AG04449 (cell line): ENCODE measurements at regions of chr2 and their contacts with region 1.

Region 1: DNA sequence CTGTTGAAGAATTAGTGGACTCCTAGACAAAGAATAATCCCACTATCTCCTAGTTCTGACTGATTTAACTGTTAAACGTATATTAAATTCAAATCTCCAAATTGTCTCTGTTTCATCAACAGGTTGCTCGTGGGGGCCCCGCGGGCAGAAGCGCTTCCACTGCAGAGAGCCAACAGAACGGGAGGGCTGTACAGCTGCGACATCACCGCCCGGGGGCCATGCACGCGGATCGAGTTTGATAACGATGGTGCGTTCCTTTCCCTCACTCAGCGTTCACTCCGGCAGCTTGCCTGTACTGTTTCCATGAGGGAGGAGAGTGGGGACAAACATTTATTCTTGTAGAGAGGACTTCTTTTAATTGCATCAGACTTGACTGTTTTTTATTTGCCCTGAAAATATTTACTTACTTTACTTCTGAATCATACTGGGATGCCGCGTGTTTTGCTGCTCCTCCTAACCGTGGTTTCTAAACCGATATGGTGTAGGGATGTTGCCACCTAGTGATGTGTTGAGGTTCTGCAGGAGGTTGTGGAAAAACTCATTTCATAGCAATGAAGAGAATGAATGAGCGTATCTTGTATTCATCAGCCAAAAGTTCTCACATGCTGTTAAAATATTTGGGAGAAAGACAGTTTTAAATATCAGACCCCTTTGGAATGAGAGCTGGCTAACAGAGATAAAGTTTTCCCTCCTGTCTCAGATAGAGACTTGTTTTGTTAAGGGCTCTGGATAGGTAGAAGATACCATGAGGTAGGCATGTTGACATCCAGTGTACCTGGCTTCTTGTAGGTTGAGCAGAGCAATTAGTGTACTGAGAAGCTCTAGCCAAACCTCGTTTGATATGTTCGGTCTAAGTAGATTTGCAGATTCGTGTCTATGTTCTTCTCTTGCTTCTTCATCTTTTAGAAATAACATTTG is 38.3 kb downstream of the ITGA6 start:
- DNase-seq: peak; percentile 56
- H3K4me3 ChIP-seq: peak overlapping the region; percentile 52
- CTCF ChIP-seq: peak; percentile 73

Region 2: GRCh38 chr2:172131713-172132555 is 333.7 kb before region 1 on chr2:
- CTCF ChIA-PET with region 1: interaction called, 43 read pairs
- POLR2A ChIA-PET with region 1: no interaction called
- DNase-seq: no peak
- H3K4me3 ChIP-seq: no peak overlapping the region
- CTCF ChIP-seq: no peak

Region 3: DNA sequence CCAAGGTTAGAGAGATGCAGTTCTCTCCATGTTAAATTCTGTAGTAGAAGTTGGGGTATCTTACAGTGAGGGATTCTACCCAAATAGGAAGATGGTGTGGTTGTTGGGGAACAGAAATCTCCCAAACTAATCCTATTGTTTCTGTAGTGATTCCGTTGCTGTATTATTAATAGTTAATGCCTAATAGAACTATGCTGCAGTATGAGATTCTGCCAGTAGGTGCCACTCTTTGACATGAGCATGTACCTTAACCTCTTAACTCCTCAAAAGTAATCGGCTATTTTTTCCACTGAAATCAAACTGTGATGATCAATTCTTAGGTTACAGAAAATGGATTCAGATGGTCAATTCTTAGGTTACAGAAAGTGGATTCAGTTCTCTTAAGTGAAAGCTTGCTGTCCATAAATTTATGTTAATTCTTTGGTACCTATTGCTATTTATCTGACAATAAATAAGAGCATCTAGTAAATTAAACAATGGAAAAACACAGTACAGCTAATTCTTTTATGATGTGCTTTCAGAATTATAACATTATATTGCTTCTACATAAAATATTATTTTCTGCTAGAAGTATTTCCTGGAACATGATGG is 265.1 kb before region 1 on chr2:
- CTCF ChIA-PET with region 1: interaction called, 164 read pairs
- POLR2A ChIA-PET with region 1: no interaction called
- DNase-seq: no peak
- H3K4me3 ChIP-seq: no peak overlapping the region
- CTCF ChIP-seq: peak; percentile 38

Region 4: DNA sequence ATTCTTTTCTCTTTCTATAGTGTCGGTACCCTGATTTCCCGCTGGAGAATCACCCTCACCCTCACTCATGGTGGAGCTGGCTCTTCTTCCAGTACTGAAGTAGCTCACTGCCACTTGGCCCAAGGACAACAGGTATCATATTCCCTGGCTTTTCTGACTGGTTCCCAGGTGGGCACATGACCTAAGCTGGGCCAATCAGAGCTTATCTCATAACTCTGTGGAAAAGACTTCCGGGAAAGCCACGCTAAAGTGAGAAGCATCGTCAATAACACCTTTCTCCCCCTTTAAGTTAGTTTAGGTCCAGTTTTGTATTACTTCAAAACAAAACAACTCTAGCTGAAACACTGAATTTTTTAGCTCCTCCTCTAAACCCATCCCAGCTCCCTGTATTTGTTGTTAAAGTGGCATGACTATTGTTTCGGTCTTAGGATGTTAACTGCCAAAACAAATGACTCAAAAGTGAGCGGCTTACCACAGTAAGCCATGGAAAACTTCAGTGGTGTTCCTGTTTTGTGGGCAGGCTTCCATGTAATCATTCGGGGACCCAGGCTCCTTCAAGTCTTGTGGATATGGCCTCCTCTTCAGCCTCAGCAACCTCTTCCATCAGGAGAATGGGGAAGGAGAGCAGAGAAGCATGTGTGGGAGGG is 225.6 kb before region 1 on chr2:
- CTCF ChIA-PET with region 1: interaction called, 18 read pairs
- POLR2A ChIA-PET with region 1: no interaction called
- DNase-seq: no peak
- H3K4me3 ChIP-seq: no peak overlapping the region
- CTCF ChIP-seq: no peak

Region 5: GRCh38 chr2:172323861-172324597 is 141.6 kb before region 1 on chr2:
- CTCF ChIA-PET with region 1: interaction called, 13 read pairs
- POLR2A ChIA-PET with region 1: no interaction called
- DNase-seq: no peak
- H3K4me3 ChIP-seq: no peak overlapping the region
- CTCF ChIP-seq: no peak

Region 6: DNA sequence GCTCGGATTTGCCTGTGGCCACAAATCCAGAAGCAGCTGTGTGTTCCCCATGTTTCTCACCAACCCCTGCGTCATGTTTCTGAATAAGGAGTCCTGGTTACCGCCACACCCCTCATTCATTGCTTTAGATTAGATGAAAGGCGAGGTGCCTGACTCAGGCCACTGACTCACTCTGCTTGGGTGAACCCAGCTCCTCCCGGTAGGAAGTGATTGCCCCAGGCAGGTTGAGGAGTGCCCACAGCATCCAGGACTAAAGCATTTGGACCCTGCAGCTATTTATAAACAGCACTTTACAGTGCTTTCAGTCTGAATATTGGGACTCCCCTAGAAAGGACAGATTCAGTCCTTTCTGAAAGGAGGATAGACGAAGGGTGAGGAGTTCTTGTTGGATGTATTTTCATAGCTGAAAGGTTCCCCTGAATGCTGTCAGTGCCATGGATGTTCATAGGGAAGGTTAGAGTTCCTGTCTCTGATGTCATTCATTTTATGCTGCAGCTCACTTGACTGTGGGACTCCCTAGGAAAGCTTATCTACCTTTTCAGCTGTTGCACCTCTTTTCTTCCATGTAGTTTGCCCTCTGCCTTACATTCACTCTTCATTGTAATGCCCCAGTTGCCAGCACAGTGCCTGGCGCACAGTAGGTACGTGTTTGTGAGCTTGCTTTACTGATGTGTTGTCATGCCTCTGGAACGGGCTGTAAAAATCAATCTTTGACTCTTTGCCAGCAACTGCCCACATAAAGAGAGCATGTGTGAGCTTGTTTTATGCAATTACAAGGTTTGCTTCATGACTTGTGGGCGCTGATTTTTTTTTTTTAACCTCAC is 23.4 kb before region 1 on chr2:
- CTCF ChIA-PET with region 1: interaction called, 226 read pairs
- POLR2A ChIA-PET with region 1: no interaction called
- DNase-seq: peak; percentile 41
- H3K4me3 ChIP-seq: no peak overlapping the region
- CTCF ChIP-seq: no peak

Region 7: GRCh38 chr2:172525606-172526005 is 59.9 kb after region 1 on chr2:
- CTCF ChIA-PET with region 1: no interaction called
- POLR2A ChIA-PET with region 1: no interaction called
- DNase-seq: no peak
- H3K4me3 ChIP-seq: no peak overlapping the region
- CTCF ChIP-seq: no peak